Sigmoid colon (tissue), 7 donors: ENCODE measurements at regions of chr3 and their contacts with region 1.

Region 1: GRCh38 chr3:146189519-146190173 is 28.7 kb upstream of the PLOD2 start:
- DNase-seq: peak; percentile 63
- H3K4me3 ChIP-seq: no peak overlapping the region
- H3K27ac ChIP-seq: no peak overlapping the region
- H3K4me1 ChIP-seq: peaks cover 0 to 15% (median 7%) of the 10 kb centered on the region in 4 donors
- H3K27me3 ChIP-seq: no peaks in the 10 kb centered on the region
- CTCF ChIP-seq: peak; percentile 26 to 76 (median 67)
- EP300 ChIP-seq: no peak
- POLR2A ChIP-seq: no peak

Region 2: GRCh38 chr3:146326670-146327543 is 137.3 kb after region 1 on chr3:
- intact Hi-C with region 1: loop called (anchors 1 kb)
- DNase-seq: peak; percentile 70
- H3K4me3 ChIP-seq: no peak overlapping the region
- H3K27ac ChIP-seq: no peak overlapping the region
- H3K4me1 ChIP-seq: peaks cover 0 to 4% (median 0%) of the 10 kb centered on the region in 4 donors
- H3K27me3 ChIP-seq: no peaks in the 10 kb centered on the region
- CTCF ChIP-seq: peak; percentile 52 to 63 (median 58)
- EP300 ChIP-seq: no peak
- POLR2A ChIP-seq: no peak

Region 3: DNA sequence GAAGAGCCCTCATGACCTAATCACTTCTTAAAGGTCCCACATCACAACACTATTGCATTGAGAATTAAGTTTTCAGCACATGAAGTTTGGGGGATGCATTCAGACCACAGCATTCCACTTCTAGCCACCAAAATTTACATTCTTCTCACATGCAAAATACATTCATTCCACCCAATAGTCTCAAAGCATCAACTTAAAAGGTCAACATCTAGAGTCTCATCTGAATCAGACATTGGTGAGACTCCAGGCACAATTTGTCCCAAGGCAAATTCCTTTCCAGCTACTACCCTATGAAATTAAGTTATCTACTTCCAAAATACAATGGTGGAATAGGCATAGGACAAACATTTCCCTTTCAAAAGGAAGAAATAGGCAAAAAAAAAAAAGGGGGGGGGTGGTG is 214.8 kb after region 1 on chr3:
- intact Hi-C with region 1: no loop called
- DNase-seq: no peak
- H3K4me3 ChIP-seq: no peak overlapping the region
- H3K27ac ChIP-seq: no peak overlapping the region
- H3K4me1 ChIP-seq: no peaks in the 10 kb centered on the region
- H3K27me3 ChIP-seq: no peaks in the 10 kb centered on the region
- CTCF ChIP-seq: no peak
- EP300 ChIP-seq: no peak
- POLR2A ChIP-seq: no peak